AG04449 (cell line): ENCODE measurements at regions of chr12 and their contacts with region 1.

Region 1: DNA sequence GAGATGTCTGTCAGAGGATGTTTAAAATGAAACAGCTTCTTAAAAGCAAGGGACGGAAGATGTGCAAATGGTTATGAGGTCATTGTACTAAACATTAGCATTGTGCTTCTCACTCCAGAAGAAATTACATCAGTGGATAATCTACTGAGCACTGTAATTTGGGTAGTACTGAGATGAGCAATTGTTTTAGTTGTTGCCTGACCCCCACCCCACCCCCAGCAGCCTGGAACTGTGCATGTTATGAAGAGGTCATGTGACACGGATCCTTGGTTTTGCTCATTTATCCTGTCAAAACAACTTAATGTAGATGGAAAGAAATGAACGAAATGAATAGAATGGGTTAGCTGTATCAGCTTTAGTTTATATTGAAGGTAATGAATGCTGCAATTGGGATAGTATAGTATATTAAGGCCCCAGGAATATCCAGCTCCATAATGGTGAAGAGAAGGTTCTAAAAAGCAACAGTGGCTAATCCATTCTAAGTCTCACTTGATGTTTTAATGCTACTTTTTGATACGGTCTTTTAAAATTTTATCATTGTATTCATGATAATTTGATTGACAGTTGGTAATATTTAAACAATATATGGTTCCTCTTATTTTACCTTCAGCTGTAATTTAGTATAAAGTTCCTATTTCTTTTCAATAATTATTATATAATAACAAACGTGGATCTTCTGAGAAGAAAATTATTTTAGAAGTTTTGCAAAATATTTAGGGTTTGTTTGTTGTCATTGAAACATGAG is 58.5 kb downstream of the WNK1 start:
- DNase-seq: no peak
- H3K4me3 ChIP-seq: no peak overlapping the region
- CTCF ChIP-seq: no peak

Region 2: DNA sequence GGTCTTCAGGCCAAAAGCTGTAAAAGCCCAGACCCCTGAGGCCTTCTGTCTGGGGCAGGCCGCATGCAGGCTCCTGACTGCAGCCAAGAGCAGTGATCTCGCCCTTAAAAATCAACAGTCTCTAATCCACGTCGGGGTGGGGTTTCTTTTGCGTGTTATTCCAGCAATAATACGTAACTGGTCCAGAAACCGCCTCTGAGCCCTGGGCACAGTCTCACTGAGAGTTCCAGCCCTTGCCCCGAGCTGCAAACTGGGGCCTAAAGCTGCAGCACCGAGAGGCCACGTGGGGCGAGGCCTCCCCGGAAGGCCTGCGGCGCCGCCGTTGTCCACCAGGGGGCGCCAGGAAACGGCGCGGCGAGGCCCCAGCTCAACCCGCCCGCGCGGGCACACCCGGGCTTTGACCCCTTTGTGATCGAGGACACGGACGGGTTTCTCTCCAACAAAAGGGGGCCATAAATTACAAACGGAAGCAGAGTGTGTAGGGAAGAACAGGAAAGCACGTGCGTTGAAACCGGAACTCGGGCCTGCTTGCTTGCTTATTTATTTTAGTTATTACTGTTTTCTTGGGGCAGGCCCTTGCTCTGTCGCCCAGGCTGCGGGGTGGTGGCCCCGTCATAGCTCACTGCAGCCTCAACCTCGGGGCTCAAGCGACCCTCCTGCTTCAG is 234.8 kb before region 1 on chr12:
- CTCF ChIA-PET with region 1: interaction called, 290 read pairs
- POLR2A ChIA-PET with region 1: no interaction called
- DNase-seq: no peak
- H3K4me3 ChIP-seq: peak overlapping the region; percentile 8; the same call in 1 of the 2 replicates
- CTCF ChIP-seq: peak; percentile 92

Region 3: GRCh38 chr12:674272-674781 is 136.5 kb before region 1 on chr12:
- CTCF ChIA-PET with region 1: no interaction called
- POLR2A ChIA-PET with region 1: no interaction called
- DNase-seq: no peak
- H3K4me3 ChIP-seq: no peak overlapping the region
- CTCF ChIP-seq: no peak

Region 4: DNA sequence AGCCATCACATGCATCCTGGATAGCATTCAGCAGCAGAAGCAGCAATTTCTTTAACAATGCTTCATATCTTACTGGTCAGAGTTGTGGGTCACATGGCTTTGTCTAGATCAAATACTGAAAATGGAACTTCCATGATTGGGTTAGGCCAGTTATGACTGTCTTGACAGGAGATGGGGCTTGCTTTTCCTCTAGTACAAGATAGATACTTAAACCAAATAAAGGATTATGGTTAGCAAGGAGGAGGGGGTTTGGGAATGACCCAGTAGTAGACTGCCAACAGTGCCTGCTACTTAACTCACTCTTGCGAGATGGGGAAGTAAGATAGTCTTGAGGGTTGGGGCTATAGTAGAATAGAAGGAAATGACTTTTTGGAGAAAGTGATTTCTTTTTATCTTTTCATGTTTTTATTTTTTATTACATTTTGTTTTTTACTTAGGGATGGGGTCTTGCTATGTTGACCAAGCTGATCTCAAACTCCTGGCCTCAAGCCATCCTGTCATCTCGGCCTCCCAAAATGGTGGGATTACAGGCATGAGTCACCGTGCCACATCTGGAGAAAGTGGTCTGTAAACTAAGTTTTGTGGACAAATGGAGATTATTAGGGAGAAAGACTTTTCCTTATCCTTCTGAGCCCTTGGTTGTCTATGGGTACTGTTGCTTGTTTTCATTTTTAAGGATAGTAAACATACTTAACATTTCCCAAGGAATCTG is 20.8 kb before region 1 on chr12:
- CTCF ChIA-PET with region 1: interaction called, 130 read pairs
- POLR2A ChIA-PET with region 1: interaction called, 3 read pairs
- DNase-seq: no peak
- H3K4me3 ChIP-seq: no peak overlapping the region
- CTCF ChIP-seq: no peak

Region 5: GRCh38 chr12:828726-829395 is 18.0 kb after region 1 on chr12:
- CTCF ChIA-PET with region 1: interaction called, 46 read pairs
- POLR2A ChIA-PET with region 1: no interaction called
- DNase-seq: no peak
- H3K4me3 ChIP-seq: no peak overlapping the region
- CTCF ChIP-seq: no peak

Region 6: DNA sequence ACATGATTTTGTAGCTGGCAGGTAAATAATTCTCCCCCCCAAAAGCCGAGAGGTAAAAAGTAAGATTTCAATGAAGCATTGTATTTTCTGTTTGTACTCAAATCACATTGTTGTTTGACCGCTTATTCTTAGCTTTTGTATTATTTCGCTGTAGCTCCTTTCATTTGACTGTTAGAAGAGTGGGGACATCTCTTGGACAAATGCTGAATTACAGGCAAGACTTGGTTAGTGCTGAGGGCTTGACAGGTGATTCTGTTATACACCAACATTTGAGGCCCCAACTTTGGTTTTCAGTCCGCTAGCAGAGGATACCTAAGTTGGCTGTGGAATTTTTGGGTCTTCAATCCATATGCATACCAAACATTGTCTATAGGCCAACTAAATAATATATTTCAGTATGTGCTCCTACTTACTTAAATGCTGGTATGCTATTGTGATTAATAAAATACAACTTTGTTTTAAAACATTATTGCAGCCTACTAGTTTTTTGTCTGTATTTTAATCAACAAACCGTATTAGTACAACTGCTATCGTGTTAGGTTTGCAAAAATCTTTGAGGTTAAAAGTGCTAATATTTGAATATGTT is 282.4 kb after region 1 on chr12:
- CTCF ChIA-PET with region 1: interaction called, 15 read pairs
- POLR2A ChIA-PET with region 1: no interaction called
- DNase-seq: no peak
- H3K4me3 ChIP-seq: no peak overlapping the region
- CTCF ChIP-seq: peak; percentile 68